WTC11 (cell line): ENCODE measurements at regions of chr4 and their contacts with region 1.

Region 1: DNA sequence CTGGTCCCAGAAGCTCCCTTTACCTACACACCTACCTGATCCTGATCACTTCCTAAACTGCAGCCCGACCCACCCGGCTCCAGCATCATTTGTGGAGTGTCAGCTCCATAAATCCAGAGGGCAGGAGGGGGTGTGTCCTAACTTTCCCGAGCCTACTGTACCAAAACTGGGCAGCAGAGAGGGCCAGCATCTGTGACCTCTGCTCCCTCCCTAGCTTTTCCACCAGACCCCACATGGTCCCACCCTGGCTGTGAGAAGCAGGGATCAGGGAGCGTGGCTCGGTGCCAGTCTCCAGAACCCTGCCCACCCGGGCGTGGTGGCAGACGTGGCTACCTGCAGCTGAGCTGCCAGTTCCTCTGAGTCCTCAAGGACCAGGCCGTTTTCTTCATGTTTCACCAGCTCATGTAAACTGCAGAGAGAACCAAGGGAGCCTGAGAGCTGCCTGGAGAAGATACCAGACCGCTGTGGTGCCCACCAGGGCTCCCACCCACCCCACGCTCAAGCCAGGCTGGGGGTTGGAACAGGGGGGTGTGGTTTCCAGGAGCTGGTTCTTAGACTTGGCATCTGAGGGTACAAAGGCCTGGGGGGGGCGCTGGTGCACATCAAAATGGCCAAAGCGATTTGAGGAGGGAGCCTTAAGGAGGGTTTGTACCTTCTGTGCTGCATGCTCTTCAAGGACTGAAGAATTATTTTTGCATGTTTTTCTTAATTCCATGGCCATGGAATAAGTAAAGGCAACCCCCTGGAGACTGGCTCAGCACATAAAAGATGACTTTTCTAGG is 76.7 kb upstream of the DRD5 start:
- DNase-seq: peak; percentile 53
- ATAC-seq: 0 out of 2 replicates have a peak, but pooled peaks have one; percentile 30
- H3K4me3 Mint-ChIP-seq: no peak overlapping the region
- H3K27ac Mint-ChIP-seq: no peak overlapping the region
- H3K4me1 Mint-ChIP-seq: peaks cover 7% of the 10 kb centered on the region; the same call in 1 of the 2 replicates
- H3K27me3 Mint-ChIP-seq: no peaks in the 10 kb centered on the region
- CTCF ChIP-seq: no peak

Region 2: DNA sequence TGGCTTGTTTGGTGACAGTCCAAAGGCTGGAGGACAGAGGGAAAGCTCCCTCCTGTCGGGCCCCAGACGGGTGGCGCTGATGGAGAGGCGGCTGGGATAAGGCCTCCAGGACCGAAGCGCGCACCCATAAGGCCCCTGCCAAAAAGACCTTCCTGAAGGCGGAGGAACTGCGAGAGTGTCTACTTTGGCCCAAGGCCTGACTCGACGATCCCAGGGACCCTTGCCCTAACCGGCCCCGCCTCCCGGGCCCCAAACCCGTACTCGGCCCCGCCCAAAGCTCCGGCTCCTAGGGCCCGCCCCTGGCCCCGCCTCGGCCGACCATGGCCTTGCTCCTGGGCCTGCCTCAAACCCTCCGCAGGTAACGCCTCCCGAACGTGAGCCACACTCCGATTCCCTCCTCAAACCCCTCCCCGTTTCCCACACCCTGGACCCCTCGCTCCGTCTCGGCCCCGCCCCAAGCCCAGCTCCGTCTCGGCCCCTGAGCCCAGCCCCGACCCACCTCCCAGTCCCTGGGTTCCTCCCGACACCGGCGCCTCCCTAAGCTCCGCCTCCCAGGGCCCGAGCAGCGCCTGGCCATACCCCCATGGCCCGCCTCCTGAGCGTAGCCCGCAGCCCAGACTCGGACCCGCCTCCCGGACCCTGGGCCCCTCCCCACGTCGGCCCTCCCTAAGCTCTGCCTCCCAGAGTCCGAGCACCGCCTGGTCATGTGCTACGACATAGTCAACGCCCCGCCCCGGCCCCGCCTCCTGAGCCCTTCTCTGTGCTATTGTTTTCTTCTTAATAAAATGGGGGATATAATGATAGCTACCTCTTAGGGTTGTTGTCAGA is 13.3 kb before region 1 on chr4:
- CTCF ChIA-PET with region 1: interaction called, 16 read pairs
- POLR2A ChIA-PET with region 1: interaction called, 4 read pairs
- DNase-seq: peak; percentile 97
- ATAC-seq: peak; percentile 100
- H3K4me3 Mint-ChIP-seq: peak overlapping the region; percentile 82
- H3K27ac Mint-ChIP-seq: peak overlapping the region; percentile 88
- H3K4me1 Mint-ChIP-seq: peaks cover 22% of the 10 kb centered on the region
- H3K27me3 Mint-ChIP-seq: peaks cover 7% of the 10 kb centered on the region
- CTCF ChIP-seq: no peak

Region 3: DNA sequence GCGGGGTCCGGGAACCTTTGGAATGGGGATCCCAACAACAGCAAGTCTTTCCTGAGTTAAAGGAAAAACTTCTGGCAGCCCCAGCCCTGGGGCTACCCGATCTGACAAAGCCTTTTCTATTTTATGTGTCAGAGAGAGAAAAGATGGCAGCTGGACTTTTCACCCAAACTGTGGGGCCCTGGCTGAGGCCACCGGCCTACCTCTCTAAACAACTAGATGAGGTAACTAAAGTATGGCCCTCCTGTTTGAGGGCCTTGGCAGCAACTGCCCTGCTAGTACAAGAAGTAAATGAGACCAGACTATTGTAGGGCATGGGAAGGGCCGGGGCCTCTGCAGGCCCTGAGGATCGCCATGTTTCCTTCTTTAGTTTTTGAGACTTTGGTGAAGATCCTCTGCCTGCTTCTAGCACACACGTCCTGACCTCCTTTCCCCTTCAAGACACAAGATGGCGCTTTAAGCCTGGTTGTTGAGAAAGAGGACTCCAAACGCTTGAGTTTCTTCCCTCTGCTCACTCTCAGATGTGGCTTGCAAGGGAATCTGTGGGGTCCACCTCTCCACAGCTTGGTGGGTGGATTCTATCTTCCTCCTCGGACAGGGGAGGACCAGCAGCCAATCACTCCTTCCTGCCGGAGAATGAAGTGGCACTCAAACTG is 58.2 kb after region 1 on chr4:
- CTCF ChIA-PET with region 1: interaction called, 16 read pairs
- POLR2A ChIA-PET with region 1: no interaction called
- DNase-seq: peak; percentile 58
- ATAC-seq: no peak; the same call in 1 of the 2 replicates
- H3K4me3 Mint-ChIP-seq: no peak overlapping the region
- H3K27ac Mint-ChIP-seq: no peak overlapping the region
- H3K4me1 Mint-ChIP-seq: peaks cover 2% of the 10 kb centered on the region
- H3K27me3 Mint-ChIP-seq: peaks cover 3% of the 10 kb centered on the region; the same call in 1 of the 2 replicates
- CTCF ChIP-seq: peak; percentile 44; the same call in 1 of the 2 replicates

Region 4: GRCh38 chr4:9812501-9813340 is 108.0 kb after region 1 on chr4:
- CTCF ChIA-PET with region 1: no interaction called
- POLR2A ChIA-PET with region 1: no interaction called
- DNase-seq: no peak
- ATAC-seq: no peak
- H3K4me3 Mint-ChIP-seq: no peak overlapping the region
- H3K27ac Mint-ChIP-seq: no peak overlapping the region
- H3K4me1 Mint-ChIP-seq: peaks cover 6% of the 10 kb centered on the region; the same call in 1 of the 2 replicates
- H3K27me3 Mint-ChIP-seq: peaks cover 13% of the 10 kb centered on the region
- CTCF ChIP-seq: no peak

Region 5: DNA sequence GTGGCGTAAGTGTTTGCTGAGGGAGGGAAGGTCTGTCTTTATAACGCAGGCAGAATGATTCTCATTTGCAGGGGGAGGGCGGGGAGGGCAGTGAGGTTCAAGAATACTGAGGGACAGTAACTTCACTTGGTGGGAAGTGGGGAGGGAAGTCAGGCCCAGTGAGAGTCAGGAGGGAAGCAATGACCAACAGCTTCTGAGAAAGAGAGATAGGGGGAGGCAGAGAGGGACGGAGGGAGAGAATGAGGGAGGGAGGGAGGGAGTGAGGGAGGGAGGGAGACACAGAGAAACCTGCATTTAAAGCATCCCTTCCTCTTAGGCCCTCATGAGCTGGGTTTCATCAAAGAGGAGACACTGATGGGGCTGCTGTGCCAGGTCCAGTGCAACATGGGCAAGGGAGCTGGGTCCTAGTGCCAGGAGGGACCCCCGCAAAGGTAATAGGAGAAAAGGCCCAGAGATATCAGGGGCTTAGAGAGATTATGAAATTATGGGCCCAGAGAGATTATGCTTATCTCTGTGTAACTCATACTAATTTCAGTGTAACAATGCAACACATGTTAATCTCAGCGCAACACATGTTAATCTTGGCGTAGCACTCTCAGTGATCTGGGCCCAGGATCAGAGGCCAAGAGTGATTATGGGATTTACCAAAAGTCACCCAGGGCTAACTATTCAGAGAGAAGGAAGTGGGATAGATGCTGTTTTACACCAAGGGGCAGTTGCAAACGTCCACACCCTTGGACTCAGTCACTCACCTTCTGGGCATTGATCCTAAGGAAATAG is 188.8 kb after region 1 on chr4:
- CTCF ChIA-PET with region 1: interaction called, 13 read pairs
- POLR2A ChIA-PET with region 1: no interaction called
- DNase-seq: no peak
- ATAC-seq: peak; percentile 91
- H3K4me3 Mint-ChIP-seq: no peak overlapping the region
- H3K27ac Mint-ChIP-seq: no peak overlapping the region
- H3K4me1 Mint-ChIP-seq: peaks cover 14% of the 10 kb centered on the region
- H3K27me3 Mint-ChIP-seq: peaks cover 4% of the 10 kb centered on the region
- CTCF ChIP-seq: no peak

Region 6: GRCh38 chr4:9898596-9899305 is 194.0 kb after region 1 on chr4:
- CTCF ChIA-PET with region 1: interaction called, 13 read pairs
- POLR2A ChIA-PET with region 1: no interaction called
- DNase-seq: peak; percentile 76
- ATAC-seq: peak; percentile 98
- H3K4me3 Mint-ChIP-seq: no peak overlapping the region
- H3K27ac Mint-ChIP-seq: no peak overlapping the region
- H3K4me1 Mint-ChIP-seq: peaks cover 12% of the 10 kb centered on the region
- H3K27me3 Mint-ChIP-seq: no peaks in the 10 kb centered on the region
- CTCF ChIP-seq: no peak

Region 7: DNA sequence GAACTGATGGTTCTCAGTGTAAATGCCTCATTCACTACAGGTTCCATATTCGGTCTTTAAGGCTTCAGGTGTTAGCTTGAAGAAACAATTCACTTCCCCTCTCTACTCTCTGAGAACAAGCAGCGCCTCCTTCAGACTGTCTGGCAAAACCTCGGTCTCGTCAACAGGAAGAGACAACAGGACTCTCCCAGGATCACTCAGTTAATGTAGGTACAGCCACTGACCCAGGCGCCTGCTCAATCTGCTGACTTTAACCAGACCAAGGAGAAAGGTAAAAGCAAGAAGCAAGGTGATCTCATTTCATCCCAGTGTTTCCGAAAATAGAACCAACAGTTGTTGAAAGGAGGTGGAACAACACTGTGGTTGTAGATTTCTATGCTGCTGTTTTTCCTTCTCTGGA is 214.3 kb after region 1 on chr4:
- CTCF ChIA-PET with region 1: interaction called, 11 read pairs
- POLR2A ChIA-PET with region 1: no interaction called
- DNase-seq: peak; percentile 41
- ATAC-seq: peak; percentile 90
- H3K4me3 Mint-ChIP-seq: no peak overlapping the region
- H3K27ac Mint-ChIP-seq: no peak overlapping the region
- H3K4me1 Mint-ChIP-seq: peaks cover 20% of the 10 kb centered on the region
- H3K27me3 Mint-ChIP-seq: no peaks in the 10 kb centered on the region
- CTCF ChIP-seq: no peak